HEK293 (cell line): ENCODE measurements at regions of chr2 and their contacts with region 1.

Region 1: DNA sequence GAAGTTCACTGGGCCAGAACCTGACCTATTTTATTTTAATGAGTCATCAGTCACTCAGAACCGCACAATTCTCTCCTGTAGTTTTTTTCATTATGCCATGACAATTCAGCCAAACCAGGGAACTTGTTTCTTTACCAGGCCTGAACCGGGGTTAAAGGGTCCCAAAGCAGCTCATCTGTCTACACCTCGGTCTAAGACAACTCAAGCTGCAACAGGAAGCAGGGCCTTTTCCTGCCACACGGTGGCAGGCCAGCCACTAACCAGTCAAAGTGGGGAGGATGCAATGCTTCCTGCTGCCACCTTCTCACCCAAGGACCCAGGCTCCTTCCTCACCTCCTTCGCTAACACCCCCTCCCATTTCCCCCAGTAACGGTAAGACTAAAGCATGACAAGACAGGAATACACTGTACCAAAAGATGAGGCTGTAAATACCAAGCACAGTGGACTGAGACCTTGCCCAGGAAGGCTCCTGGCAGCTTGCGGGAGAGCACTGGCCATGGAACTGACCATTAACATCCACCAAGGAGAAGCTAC is 56.7 kb upstream of the ACKR3 start:
- H3K4me3 ChIP-seq: no peak overlapping the region
- H3K27ac ChIP-seq: no peak overlapping the region
- H3K4me1 ChIP-seq: no peaks in the 10 kb centered on the region
- CTCF ChIP-seq: peak; percentile 55; the same call in 1 of the 2 replicates

Region 2: GRCh38 chr2:236472720-236473495 is 40.1 kb before region 1 on chr2:
- CTCF ChIA-PET with region 1: no interaction called
- POLR2A ChIA-PET with region 1: no interaction called
- H3K4me3 ChIP-seq: no peak overlapping the region
- H3K27ac ChIP-seq: no peak overlapping the region
- H3K4me1 ChIP-seq: no peaks in the 10 kb centered on the region
- CTCF ChIP-seq: no peak

Region 3: DNA sequence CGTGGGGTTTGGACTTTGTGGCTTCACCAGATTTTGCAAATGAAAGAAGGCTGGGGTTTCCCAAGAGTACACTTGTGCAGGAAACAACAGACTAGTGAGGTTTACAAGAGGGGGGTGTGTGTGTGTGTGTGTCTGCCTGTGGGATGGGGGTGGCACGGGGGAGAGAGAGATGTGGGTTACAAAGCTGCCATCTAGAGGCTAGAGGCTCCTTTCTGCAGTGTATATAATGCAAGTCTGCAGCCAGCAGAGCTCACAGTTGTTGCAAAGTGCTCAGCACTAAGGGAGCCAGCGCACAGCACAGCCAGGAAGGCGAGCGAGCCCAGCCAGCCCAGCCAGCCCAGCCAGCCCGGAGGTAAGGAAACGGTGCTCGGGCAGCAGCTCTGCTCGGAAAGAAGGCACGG is 56.6 kb after region 1 on chr2 and contains the start of gene ACKR3:
- CTCF ChIA-PET with region 1: interaction called, 24 read pairs
- POLR2A ChIA-PET with region 1: no interaction called
- H3K4me3 ChIP-seq: no peak within 1 kb of the TSS
- H3K27ac ChIP-seq: no peak within 1 kb of the TSS
- H3K4me1 ChIP-seq: no peaks in the 10 kb centered on the region
- CTCF ChIP-seq: peak; percentile 91

Region 4: DNA sequence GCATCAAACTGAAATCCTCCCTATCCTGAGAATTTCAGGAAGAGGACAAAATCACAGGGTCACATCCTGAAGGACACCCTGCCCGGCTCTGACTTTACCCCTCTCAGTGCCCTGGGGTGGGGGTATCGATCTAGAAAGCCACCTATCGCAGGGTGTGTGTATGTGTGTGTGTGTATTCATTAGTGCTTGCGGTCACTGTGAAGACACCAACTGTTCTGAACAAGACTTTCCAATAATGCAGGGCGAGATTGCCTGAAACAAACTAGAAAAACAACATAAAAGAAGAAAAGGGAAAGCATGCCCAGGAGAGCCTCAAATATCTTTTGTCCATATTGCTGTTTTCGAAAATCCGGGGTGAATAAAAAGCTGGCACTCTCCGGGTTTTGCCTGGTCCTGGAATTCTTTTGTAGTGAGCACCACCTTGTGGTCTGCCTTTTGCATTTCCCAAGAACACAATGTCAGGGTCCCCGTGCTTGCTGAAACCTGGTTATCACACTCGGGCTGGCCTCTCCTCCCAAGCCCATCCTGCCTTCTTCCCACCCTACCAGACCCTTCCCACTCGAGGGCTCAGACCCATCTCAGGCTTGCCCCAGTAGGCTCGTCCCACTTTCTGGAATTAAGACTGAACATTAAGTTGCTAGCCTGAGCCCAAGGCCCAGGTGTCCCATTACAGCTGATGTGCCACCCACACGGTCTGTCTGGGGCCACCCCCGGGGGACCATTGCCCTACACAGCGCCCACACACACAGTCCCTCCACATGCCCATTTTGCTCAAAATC is 547.8 kb after region 1 on chr2:
- CTCF ChIA-PET with region 1: interaction called, 28 read pairs
- POLR2A ChIA-PET with region 1: no interaction called
- H3K4me3 ChIP-seq: no peak overlapping the region
- H3K27ac ChIP-seq: no peak overlapping the region
- H3K4me1 ChIP-seq: no peaks in the 10 kb centered on the region
- CTCF ChIP-seq: peak; percentile 45; the same call in 1 of the 2 replicates